Caco-2 (cell line): ENCODE measurements at regions of chr18 and their contacts with region 1.

Region 1: GRCh38 chr18:35355140-35355618 is 11.0 kb upstream of the ZNF24 start:
- DNase-seq: peak; percentile 32 to 35
- H3K4me3 ChIP-seq: no peak overlapping the region
- H3K4me3 Mint-ChIP-seq: no peak overlapping the region
- H3K27ac Mint-ChIP-seq: no peak overlapping the region
- H3K4me1 ChIP-seq: no peaks in the 10 kb centered on the region
- H3K4me1 Mint-ChIP-seq: no peaks in the 10 kb centered on the region
- H3K27me3 ChIP-seq: no peaks in the 10 kb centered on the region
- H3K27me3 Mint-ChIP-seq: peaks cover 1% of the 10 kb centered on the region
- CTCF ChIP-seq: peak; percentile 30 to 62

Region 2: GRCh38 chr18:35231052-35231451 is 124.1 kb before region 1 on chr18:
- CTCF ChIA-PET with region 1: no interaction called
- POLR2A ChIA-PET with region 1: no interaction called
- intact Hi-C with region 1: loop called (anchors 1 kb)
- DNase-seq: peak; percentile 69 to 70
- H3K4me3 ChIP-seq: no peak overlapping the region
- H3K4me3 Mint-ChIP-seq: peak overlapping the region; percentile 60
- H3K27ac Mint-ChIP-seq: no peak overlapping the region
- H3K4me1 ChIP-seq: no peaks in the 10 kb centered on the region
- H3K4me1 Mint-ChIP-seq: no peaks in the 10 kb centered on the region
- H3K27me3 ChIP-seq: no peaks in the 10 kb centered on the region
- H3K27me3 Mint-ChIP-seq: peaks cover 2% of the 10 kb centered on the region
- CTCF ChIP-seq: peak; percentile 51 to 68

Region 3: GRCh38 chr18:35282353-35282752 is 72.8 kb before region 1 on chr18:
- CTCF ChIA-PET with region 1: no interaction called
- POLR2A ChIA-PET with region 1: no interaction called
- intact Hi-C with region 1: no loop called
- DNase-seq: no peak
- H3K4me3 ChIP-seq: no peak overlapping the region
- H3K4me3 Mint-ChIP-seq: no peak overlapping the region
- H3K27ac Mint-ChIP-seq: no peak overlapping the region
- H3K4me1 ChIP-seq: no peaks in the 10 kb centered on the region
- H3K4me1 Mint-ChIP-seq: no peaks in the 10 kb centered on the region
- H3K27me3 ChIP-seq: no peaks in the 10 kb centered on the region
- H3K27me3 Mint-ChIP-seq: no peaks in the 10 kb centered on the region
- CTCF ChIP-seq: no peak

Region 4: DNA sequence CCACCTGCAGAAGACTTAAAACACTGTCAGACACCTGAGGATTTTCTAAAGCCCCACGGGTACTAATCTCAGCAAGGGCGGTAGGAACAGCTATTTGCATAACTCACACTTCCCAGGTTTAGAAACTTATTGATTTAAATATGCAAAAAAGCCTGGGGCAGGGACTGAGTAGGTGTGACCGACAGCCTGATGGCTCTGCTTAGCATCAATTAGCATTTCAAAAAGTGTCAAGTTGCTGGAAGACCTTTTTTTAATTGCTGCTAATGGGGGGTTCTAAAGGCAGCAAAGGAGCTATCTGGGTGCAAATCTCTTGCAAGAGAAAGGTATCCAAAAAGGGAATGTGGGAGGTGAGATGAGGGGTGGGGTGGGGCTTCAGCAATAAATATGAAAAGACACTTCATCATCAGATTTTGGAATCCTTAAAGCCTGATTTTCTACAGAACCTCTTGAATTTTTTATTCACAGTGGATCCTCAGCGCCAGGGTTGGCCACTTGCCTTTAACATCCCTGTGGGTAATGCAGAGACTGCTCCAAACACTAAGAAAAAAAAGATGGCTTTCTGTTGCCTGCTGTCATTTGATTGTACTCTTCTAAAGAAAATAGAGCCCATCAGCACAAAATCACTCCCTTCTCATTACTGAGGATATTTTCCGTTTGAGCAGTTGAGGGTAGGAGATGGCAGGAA is 496.2 kb after region 1 on chr18:
- CTCF ChIA-PET with region 1: no interaction called
- POLR2A ChIA-PET with region 1: no interaction called
- intact Hi-C with region 1: no loop called
- DNase-seq: no peak
- H3K4me3 ChIP-seq: no peak overlapping the region
- H3K4me3 Mint-ChIP-seq: no peak overlapping the region
- H3K27ac Mint-ChIP-seq: no peak overlapping the region
- H3K4me1 ChIP-seq: no peaks in the 10 kb centered on the region
- H3K4me1 Mint-ChIP-seq: no peaks in the 10 kb centered on the region
- H3K27me3 ChIP-seq: no peaks in the 10 kb centered on the region
- H3K27me3 Mint-ChIP-seq: peaks cover 9% of the 10 kb centered on the region
- CTCF ChIP-seq: no peak